CD4-positive, alpha-beta T cell (primary cell): ENCODE measurements at regions of chr6 and their contacts with region 1.

Region 1: DNA sequence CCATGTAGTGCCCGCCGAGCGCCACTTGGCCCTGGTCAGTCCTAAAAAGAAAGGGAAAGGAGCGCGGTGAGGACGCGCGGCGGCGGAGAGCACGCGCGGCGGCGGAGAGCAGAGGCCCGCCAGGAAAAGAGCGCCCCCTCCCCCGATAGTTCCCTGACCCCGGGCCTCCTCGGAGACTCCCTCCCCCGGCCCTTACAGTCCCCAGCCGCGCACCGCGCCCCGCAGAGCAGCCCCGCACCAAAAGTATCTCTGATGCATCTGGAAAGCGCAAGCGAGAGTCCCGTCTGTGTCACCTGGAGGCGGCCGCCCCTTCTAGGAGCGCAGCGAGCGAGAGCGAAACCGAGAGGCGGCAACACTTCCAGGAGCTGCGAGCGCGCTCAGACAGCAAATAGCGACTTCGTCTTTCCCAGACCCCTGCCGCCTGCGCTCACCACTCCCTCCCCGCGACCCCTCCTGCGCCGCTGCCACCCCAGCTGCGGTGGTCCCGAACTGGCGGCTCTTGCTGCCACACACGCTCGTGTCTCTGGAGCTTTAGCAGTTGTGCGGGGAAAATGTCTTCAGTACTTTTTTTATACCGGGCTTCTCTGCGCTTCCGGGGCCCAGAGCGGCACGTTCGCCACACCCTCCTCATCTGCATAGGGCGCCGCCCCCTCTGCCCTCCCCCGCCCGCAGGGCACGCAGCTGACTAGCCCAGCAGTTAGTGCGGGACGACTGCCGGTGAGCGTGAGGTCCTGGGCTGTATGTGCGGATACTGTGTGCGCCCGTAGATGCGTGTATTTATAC is at the start of gene TENT5A:
- DNase-seq: peak; percentile 73 to 91 (median 82)
- ATAC-seq: peak; percentile 81
- H3K4me3 ChIP-seq: peak within 1 kb of the TSS; percentile 92
- H3K4me3 Mint-ChIP-seq: peak within 1 kb of the TSS; percentile 98
- H3K27ac ChIP-seq: peak within 1 kb of the TSS; percentile 62 to 82
- H3K27ac Mint-ChIP-seq: peak within 1 kb of the TSS; percentile 89
- H3K4me1 ChIP-seq: peaks cover 26% of the 10 kb centered on the region
- H3K4me1 Mint-ChIP-seq: peaks cover 37% of the 10 kb centered on the region
- H3K27me3 ChIP-seq: no peaks in the 10 kb centered on the region
- H3K27me3 Mint-ChIP-seq: no peaks in the 10 kb centered on the region
- CTCF ChIP-seq: no peak
- total RNA-seq, gene TENT5A: 6.3 to 6.7 TPM

Region 2: GRCh38 chr6:79869600-79870084 is 1882.7 kb before region 1 on chr6:
- CTCF ChIA-PET with region 1: no interaction called
- POLR2A ChIA-PET with region 1: no interaction called
- intact Hi-C with region 1: loop called (anchors 5 to 10 kb)
- DNase-seq: peak; percentile 60 to 88 (median 68)
- ATAC-seq: peak; percentile 99
- H3K4me3 ChIP-seq: peak overlapping the region; percentile 19
- H3K4me3 Mint-ChIP-seq: peak overlapping the region; percentile 35
- H3K27ac ChIP-seq: no peak overlapping the region
- H3K27ac Mint-ChIP-seq: no peak overlapping the region
- H3K4me1 ChIP-seq: peaks cover 9% of the 10 kb centered on the region
- H3K4me1 Mint-ChIP-seq: peaks cover 15% of the 10 kb centered on the region
- H3K27me3 ChIP-seq: peaks cover 0 to 6% of the 10 kb centered on the region in 2 experiments
- H3K27me3 Mint-ChIP-seq: peaks cover 14% of the 10 kb centered on the region
- CTCF ChIP-seq: peak; percentile 97

Region 3: GRCh38 chr6:80004173-80005072 is 1747.9 kb before region 1 on chr6 and contains the start of gene TTK:
- CTCF ChIA-PET with region 1: interaction called, 3 read pairs
- POLR2A ChIA-PET with region 1: interaction called, 10 read pairs
- intact Hi-C with region 1: loop called in 1 of 2 experiments (anchors 5 kb)
- DNase-seq: peak; percentile 81 to 97 (median 90)
- ATAC-seq: peak; percentile 97
- H3K4me3 ChIP-seq: peak within 1 kb of the TSS; percentile 67
- H3K4me3 Mint-ChIP-seq: peak within 1 kb of the TSS; percentile 93
- H3K27ac ChIP-seq: peak within 1 kb of the TSS; percentile 85 to 86
- H3K27ac Mint-ChIP-seq: peak within 1 kb of the TSS; percentile 95
- H3K4me1 ChIP-seq: peaks cover 14% of the 10 kb centered on the region
- H3K4me1 Mint-ChIP-seq: peaks cover 21% of the 10 kb centered on the region
- H3K27me3 ChIP-seq: no peaks in the 10 kb centered on the region
- H3K27me3 Mint-ChIP-seq: no peaks in the 10 kb centered on the region
- CTCF ChIP-seq: no peak
- total RNA-seq, gene TTK: 0.45 to 0.60 TPM

Region 4: DNA sequence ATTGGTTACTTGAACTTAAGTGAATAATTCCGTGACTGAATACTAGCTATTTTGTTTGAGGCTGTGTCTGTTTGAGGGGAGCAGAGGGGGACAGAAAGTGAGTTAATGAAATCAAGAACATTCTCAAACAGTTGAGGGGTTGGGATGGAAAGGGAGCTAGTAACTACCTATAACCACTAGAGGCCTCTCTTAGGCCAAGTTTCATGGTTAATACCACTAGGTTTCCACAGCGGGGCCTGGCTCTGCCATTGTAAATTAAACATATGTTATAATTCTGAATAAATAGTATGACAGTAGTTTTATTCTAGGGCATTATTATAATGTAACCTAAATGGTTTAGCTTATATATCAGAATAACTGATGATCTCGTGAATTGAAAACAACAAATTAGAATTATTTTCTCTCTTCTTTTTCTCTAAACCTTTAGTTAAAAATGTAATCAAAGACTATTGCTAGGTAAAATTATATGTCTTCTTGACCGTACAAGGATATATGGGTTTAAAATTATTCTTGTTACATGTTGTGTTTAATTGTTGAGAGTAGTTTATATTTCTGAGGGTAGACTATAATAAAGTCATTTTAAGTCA is 1537.8 kb before region 1 on chr6:
- CTCF ChIA-PET with region 1: interaction called, 5 read pairs
- POLR2A ChIA-PET with region 1: no interaction called
- intact Hi-C with region 1: loop called (anchors 5 kb)
- DNase-seq: peak in 3 of 14 experiments; percentile 20 to 27 (median 21)
- ATAC-seq: peak; percentile 43
- H3K4me3 ChIP-seq: no peak overlapping the region
- H3K4me3 Mint-ChIP-seq: no peak overlapping the region
- H3K27ac ChIP-seq: no peak overlapping the region
- H3K27ac Mint-ChIP-seq: no peak overlapping the region
- H3K4me1 ChIP-seq: no peaks in the 10 kb centered on the region
- H3K4me1 Mint-ChIP-seq: no peaks in the 10 kb centered on the region
- H3K27me3 ChIP-seq: no peaks in the 10 kb centered on the region
- H3K27me3 Mint-ChIP-seq: no peaks in the 10 kb centered on the region
- CTCF ChIP-seq: peak; percentile 62

Region 5: DNA sequence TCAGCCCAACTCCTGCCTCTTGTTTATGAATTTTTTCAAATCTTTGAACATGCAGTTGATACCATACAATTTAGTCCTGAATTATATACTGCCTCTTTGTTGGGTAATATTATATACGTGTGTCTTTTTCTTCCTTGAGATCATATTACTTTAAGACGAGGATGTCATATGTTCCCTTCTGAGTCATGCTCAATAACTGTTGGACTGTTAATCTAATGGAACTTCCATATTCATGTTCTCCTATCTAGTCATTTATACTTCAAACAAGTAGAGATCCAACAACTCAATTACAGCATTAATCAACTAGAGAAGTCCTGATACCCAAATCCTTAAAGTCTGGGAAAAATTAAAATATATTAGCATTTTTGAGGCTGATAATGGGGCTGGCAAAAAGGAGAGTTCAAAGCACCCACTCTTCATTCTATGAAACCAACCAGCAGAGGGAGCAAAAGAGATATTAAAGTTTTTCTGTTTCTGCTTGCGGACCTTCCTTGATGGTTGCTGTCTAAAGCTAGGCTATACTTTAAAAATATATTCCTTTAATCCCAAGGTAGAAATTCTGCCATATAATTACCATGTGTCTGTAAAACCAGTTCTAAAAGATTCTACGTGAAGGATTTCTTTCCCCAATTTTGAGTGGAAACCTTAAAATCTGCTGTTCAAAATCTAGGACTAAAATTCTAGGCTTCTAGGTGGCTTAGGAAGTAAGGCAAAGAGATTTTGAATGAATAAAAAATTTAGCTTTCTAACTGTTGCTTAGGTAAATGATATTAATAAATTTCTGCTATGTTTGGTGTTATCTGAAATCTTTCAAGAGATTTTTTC is 1147.0 kb before region 1 on chr6:
- CTCF ChIA-PET with region 1: no interaction called
- POLR2A ChIA-PET with region 1: interaction called, 4 read pairs
- intact Hi-C with region 1: loop called in 1 of 2 experiments (anchors 2 kb)
- DNase-seq: peak in 3 of 14 experiments; percentile 17 to 30 (median 18)
- ATAC-seq: no peak
- H3K4me3 ChIP-seq: no peak overlapping the region
- H3K4me3 Mint-ChIP-seq: no peak overlapping the region
- H3K27ac ChIP-seq: no peak overlapping the region
- H3K27ac Mint-ChIP-seq: no peak overlapping the region
- H3K4me1 ChIP-seq: no peaks in the 10 kb centered on the region
- H3K4me1 Mint-ChIP-seq: no peaks in the 10 kb centered on the region
- H3K27me3 ChIP-seq: peaks cover 0 to 3% of the 10 kb centered on the region in 2 experiments
- H3K27me3 Mint-ChIP-seq: peaks cover 10% of the 10 kb centered on the region
- CTCF ChIP-seq: peak; percentile 26

Region 6: DNA sequence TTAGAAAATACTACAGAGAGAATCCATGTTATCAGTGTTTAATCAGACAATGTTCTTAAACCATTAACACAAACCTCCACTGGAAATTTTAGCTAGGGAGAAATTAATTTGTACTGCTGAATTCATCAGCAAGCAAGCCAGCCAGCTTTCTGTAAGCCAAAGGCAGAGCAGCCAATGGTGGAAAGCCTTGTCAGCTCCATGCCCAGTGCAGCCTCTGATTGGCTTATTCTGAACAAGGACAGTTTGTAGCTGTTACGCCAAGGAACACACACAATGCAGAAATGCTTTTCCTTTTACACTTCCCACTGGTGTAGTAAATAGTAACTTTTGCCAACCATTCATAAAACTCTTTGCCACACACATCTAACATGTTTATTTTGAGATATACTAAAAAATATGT is 264.8 kb before region 1 on chr6:
- CTCF ChIA-PET with region 1: no interaction called
- POLR2A ChIA-PET with region 1: no interaction called
- intact Hi-C with region 1: no loop called
- DNase-seq: no peak
- ATAC-seq: no peak
- H3K4me3 ChIP-seq: no peak overlapping the region
- H3K4me3 Mint-ChIP-seq: no peak overlapping the region
- H3K27ac ChIP-seq: no peak overlapping the region
- H3K27ac Mint-ChIP-seq: no peak overlapping the region
- H3K4me1 ChIP-seq: no peaks in the 10 kb centered on the region
- H3K4me1 Mint-ChIP-seq: no peaks in the 10 kb centered on the region
- H3K27me3 ChIP-seq: no peaks in the 10 kb centered on the region
- H3K27me3 Mint-ChIP-seq: no peaks in the 10 kb centered on the region
- CTCF ChIP-seq: no peak

Region 7: DNA sequence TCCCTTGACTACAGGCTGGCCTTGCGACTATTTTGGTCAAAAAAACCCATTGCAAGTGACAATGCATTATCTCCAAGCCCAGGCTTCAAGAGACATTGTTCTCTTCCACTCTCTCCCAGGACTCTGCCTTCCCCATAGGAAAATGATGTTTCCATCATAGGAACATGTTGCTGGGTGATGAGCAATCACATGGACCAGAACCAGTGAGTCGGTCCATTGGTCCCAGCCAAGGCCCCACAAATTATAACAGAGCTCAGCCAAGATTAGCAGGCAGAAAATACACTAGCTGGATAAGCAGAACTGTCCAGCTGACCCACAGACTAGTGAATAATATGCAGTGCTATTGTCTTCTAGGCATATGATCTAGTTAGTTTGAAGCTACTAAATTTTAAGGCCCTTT is 27.2 kb before region 1 on chr6:
- CTCF ChIA-PET with region 1: no interaction called
- POLR2A ChIA-PET with region 1: no interaction called
- intact Hi-C with region 1: no loop called
- DNase-seq: no peak
- ATAC-seq: no peak
- H3K4me3 ChIP-seq: no peak overlapping the region
- H3K4me3 Mint-ChIP-seq: no peak overlapping the region
- H3K27ac ChIP-seq: no peak overlapping the region
- H3K27ac Mint-ChIP-seq: no peak overlapping the region
- H3K4me1 ChIP-seq: no peaks in the 10 kb centered on the region
- H3K4me1 Mint-ChIP-seq: no peaks in the 10 kb centered on the region
- H3K27me3 ChIP-seq: no peaks in the 10 kb centered on the region
- H3K27me3 Mint-ChIP-seq: no peaks in the 10 kb centered on the region
- CTCF ChIP-seq: no peak